PC-9 (cell line): ENCODE measurements at regions of chr1 and their contacts with region 1.

Region 1: DNA sequence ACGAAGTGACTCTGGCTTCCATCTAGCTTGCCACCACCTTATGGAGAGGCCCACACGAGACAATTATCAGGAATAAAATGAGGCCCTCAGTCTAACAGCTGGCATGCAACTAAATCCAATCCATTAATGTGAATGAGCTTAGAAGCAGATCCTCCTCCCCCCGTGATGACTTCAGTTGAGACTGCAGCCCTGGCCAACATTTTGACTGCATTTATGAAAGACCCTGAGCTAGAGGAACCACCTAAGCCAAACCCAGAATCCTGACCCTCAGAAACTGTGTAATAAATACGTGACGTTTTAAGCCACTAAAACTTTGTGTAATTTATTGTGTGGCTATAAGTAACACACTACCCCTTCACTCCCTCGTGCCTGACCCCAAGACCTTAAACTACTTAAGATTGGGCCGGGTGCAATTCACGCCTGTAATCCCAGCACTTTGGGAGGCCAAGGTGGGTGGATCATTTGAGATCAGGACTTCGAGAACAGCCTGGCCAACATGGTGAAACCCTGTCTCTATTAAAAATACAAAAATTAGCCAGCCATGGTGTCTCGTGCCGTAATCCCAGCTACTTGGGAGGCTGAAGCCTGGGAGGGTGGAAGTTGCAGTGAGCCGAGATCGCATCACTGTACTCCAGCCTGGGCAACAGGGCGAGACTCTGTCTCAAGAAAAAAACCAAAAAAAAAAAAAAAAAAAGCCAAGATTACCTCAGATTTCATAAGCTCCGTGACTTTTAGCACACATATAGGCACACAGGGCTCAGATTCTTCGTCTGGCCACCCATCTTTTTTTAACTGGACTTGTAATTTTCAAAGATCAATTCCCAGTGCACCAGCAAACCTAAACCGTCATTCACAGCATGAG is 72.5 kb downstream of the ENAH start:
- DNase-seq: no peak
- H3K4me3 ChIP-seq: no peak overlapping the region
- H3K27ac ChIP-seq: no peak overlapping the region
- H3K4me1 ChIP-seq: no peaks in the 10 kb centered on the region
- H3K27me3 ChIP-seq: no peaks in the 10 kb centered on the region
- CTCF ChIP-seq: no peak

Region 2: GRCh38 chr1:225354906-225355305 is 225.6 kb before region 1 on chr1:
- CTCF ChIA-PET with region 1: no interaction called
- POLR2A ChIA-PET with region 1: no interaction called
- intact Hi-C with region 1: no loop called
- DNase-seq: no peak
- H3K4me3 ChIP-seq: no peak overlapping the region
- H3K27ac ChIP-seq: no peak overlapping the region
- H3K4me1 ChIP-seq: no peaks in the 10 kb centered on the region
- H3K27me3 ChIP-seq: no peaks in the 10 kb centered on the region
- CTCF ChIP-seq: no peak

Region 3: DNA sequence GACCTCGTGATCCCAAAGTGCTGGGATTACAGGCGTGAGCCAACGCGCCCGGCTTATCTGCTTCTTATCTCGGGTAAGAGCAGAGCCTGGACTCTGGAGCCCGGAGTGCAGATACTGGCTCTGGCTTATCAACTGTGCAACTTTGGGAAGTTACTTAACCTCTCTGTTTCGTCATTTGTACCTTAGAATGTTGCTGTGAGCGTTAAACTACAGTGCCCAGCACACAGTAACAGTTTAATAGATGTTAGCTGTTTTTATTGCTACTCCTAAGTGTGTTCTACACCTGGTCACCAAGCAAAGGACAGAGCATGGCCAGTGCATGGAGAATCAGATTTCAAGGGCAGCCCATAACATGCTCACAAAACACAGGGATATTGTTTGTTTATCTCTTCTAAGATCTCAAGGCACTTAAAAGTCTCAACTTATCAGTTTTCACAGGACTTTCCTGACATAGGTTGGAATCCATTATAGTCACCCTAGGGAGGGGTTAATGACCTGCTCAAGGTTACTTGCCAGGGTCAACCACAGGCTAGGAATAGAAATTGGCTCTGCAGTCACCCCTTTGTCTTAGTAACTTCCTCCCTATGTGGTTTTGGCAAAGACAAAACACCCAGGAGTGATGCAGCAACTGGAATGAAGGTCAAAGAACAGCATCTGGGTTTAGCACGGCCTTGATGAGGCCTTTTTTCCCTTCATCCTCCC is 174.6 kb after region 1 on chr1:
- CTCF ChIA-PET with region 1: no interaction called
- POLR2A ChIA-PET with region 1: interaction called, 15 read pairs
- intact Hi-C with region 1: no loop called
- DNase-seq: peak; percentile 63 to 83
- H3K4me3 ChIP-seq: no peak overlapping the region
- H3K27ac ChIP-seq: peak overlapping the region; percentile 48
- H3K4me1 ChIP-seq: peaks cover 30% of the 10 kb centered on the region
- H3K27me3 ChIP-seq: no peaks in the 10 kb centered on the region
- CTCF ChIP-seq: no peak